Activated CD4-positive, alpha-beta memory T cell treated with anti-CD3 and anti-CD28 coated beads for 36 hours (primary cell): ENCODE measurements at regions of chr21 and their contacts with region 1.

Region 1: GRCh38 chr21:42833439-42833815 is 45.9 kb downstream of the WDR4 start:
- DNase-seq: peak; percentile 83
- H3K4me3 Mint-ChIP-seq: peak overlapping the region; percentile 16
- H3K27ac Mint-ChIP-seq: no peak overlapping the region
- H3K4me1 Mint-ChIP-seq: peaks cover 35% of the 10 kb centered on the region
- H3K27me3 Mint-ChIP-seq: peaks cover 9% of the 10 kb centered on the region

Region 2: GRCh38 chr21:42684109-42684916 is 149.1 kb before region 1 on chr21:
- CTCF ChIA-PET with region 1: no interaction called
- POLR2A ChIA-PET with region 1: no interaction called
- intact Hi-C with region 1: loop called (anchors 5 kb)
- DNase-seq: peak; percentile 77
- H3K4me3 Mint-ChIP-seq: peak overlapping the region; percentile 72
- H3K27ac Mint-ChIP-seq: peak overlapping the region; percentile 88
- H3K4me1 Mint-ChIP-seq: peaks cover 47% of the 10 kb centered on the region
- H3K27me3 Mint-ChIP-seq: peaks cover 4% of the 10 kb centered on the region

Region 3: DNA sequence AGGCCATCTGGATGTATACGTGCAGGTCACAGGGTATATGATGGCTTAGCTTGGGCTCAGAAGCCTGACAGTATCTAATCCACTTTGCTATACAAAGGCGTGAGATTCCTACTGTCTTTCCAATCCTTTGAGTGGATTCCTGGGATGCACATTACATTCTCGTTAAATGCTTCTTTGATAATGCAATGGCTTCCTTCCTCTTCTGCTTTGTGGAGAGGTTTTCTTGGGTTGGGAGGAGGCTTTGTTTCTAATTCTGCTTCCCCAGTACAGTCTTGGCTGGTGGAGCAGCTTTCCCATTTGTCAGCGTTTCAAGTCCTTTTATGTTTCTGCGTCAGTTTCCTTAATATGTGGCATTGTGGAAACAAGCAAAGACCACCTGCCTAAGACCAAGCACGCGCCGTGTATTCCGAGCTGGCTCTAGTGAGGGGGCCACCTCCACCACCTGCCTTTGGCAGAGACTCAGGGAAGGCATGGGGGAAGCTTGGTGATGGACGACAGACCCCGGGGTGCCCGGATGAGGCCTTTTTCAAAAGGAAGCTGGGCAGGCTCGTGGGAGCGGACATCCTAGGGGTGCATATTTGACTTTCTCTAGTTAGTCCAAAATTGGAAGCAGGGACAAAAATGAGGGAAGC is 26.8 kb before region 1 on chr21:
- CTCF ChIA-PET with region 1: no interaction called
- POLR2A ChIA-PET with region 1: no interaction called
- intact Hi-C with region 1: no loop called
- DNase-seq: no peak
- H3K4me3 Mint-ChIP-seq: no peak overlapping the region
- H3K27ac Mint-ChIP-seq: no peak overlapping the region
- H3K4me1 Mint-ChIP-seq: no peaks in the 10 kb centered on the region
- H3K27me3 Mint-ChIP-seq: peaks cover 8% of the 10 kb centered on the region

Region 4: GRCh38 chr21:42862774-42863503 is 29.5 kb after region 1 on chr21:
- CTCF ChIA-PET with region 1: no interaction called
- POLR2A ChIA-PET with region 1: no interaction called
- intact Hi-C with region 1: no loop called
- DNase-seq: no peak
- H3K4me3 Mint-ChIP-seq: no peak overlapping the region
- H3K27ac Mint-ChIP-seq: no peak overlapping the region
- H3K4me1 Mint-ChIP-seq: peaks cover 8% of the 10 kb centered on the region
- H3K27me3 Mint-ChIP-seq: no peaks in the 10 kb centered on the region

Region 5: DNA sequence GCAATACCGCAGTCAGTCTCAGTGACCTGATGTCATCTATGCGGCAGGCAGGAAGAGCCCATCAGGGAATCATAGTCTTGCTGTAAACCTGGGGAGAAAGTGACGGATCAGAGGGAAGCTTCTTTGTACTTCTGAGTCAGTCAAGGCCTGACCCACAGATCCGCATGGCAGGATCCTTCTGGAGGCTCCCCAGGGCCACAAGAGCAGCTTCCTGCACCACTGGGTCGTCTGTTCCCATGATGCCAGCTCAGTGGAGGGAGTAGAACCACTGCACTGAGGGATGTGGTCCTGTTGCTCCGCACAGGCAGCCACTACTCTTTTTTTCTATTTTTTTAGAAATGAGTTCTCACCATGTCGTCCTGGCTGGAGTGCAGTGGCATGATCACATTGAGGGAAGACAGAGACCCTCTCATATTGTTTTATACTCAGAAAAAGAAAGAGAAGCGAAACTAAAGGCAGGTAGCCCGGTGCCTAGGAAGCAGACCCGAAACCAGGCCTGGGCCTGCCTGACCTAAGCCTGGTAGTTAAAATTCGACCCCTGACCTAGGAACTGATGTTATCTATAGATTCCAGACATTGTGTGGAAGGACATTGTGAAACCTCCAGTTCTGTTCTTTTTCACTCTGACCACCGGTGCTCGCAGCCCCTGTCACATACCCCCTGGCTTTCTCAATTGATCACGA is 98.3 kb after region 1 on chr21:
- CTCF ChIA-PET with region 1: no interaction called
- POLR2A ChIA-PET with region 1: no interaction called
- intact Hi-C with region 1: no loop called
- DNase-seq: no peak
- H3K4me3 Mint-ChIP-seq: no peak overlapping the region
- H3K27ac Mint-ChIP-seq: no peak overlapping the region
- H3K4me1 Mint-ChIP-seq: no peaks in the 10 kb centered on the region
- H3K27me3 Mint-ChIP-seq: no peaks in the 10 kb centered on the region